ENCODE measurements at regions of chr11 and their contacts with region 1.

Region 1: GRCh38 chr11:111422494-111423249 is 43.6 kb upstream of the POU2AF1 start:
- DNase-seq: no peak
- ATAC-seq: peak; percentile 93
- H3K4me3 ChIP-seq: no peak overlapping the region
- H3K27ac ChIP-seq: no peak overlapping the region
- H3K4me1 ChIP-seq: peaks cover 39% of the 10 kb centered on the region
- H3K27me3 ChIP-seq: no peaks in the 10 kb centered on the region
- CTCF ChIP-seq: peak; percentile 85 to 98 (median 94)
- EP300 ChIP-seq: no peak
- POLR2A ChIP-seq: no peak
- RAD21 ChIP-seq: peak; percentile 100

Region 2: DNA sequence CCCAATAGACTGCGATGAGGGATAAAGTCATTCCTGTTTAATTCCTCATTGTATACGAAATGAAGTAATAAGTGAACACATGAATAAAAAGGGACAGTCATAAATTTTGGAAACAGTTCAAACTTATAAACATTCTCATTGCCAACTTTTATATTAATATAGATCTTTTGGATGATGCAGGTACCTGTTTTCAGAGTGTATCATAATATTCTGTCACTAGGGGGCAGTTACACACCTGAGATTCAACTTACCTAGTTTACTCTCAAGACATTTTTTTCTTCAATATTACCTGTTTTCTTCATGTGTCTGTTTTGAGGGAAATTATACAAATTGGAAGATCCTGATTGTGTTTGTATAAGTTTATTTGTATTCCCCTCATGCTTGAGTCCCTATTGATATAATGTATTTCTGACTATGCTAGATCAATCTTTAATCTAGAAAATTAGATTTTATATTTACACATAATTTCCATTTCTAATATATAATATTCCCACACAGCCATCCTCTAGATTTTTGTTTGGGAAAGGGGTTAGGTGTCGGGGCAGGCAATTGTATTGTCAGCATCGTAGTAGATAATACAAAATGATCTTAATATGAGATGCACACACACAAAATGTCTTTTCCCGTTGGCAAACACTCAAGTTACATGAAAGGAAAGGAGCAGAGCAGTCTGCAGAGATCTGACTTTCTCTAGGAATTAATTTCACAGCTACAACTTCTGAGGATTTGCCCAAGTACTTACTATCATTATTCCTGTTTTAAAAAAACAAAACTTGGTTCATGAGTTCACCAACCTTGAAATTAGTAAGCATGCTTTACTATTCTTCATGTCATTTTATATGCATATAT is 974.6 kb before region 1 on chr11:
- CTCF ChIA-PET with region 1: interaction called, 3 read pairs
- POLR2A ChIA-PET with region 1: no interaction called
- RAD21 ChIA-PET with region 1: no interaction called
- SMC1A ChIA-PET with region 1: interaction called, 3 read pairs
- in situ Hi-C with region 1: loop called (anchors 10 kb)
- intact Hi-C with region 1: no loop called
- DNase-seq: no peak
- ATAC-seq: peak; percentile 65
- H3K4me3 ChIP-seq: no peak overlapping the region
- H3K27ac ChIP-seq: no peak overlapping the region
- H3K4me1 ChIP-seq: peaks cover 3% of the 10 kb centered on the region; the same call in 1 of the 2 replicates
- H3K27me3 ChIP-seq: no peaks in the 10 kb centered on the region
- CTCF ChIP-seq: peak; percentile 38 to 52 (median 49); a peak in 4 of 6 replicates
- EP300 ChIP-seq: no peak
- POLR2A ChIP-seq: no peak
- RAD21 ChIP-seq: peak; percentile 68

Region 3: DNA sequence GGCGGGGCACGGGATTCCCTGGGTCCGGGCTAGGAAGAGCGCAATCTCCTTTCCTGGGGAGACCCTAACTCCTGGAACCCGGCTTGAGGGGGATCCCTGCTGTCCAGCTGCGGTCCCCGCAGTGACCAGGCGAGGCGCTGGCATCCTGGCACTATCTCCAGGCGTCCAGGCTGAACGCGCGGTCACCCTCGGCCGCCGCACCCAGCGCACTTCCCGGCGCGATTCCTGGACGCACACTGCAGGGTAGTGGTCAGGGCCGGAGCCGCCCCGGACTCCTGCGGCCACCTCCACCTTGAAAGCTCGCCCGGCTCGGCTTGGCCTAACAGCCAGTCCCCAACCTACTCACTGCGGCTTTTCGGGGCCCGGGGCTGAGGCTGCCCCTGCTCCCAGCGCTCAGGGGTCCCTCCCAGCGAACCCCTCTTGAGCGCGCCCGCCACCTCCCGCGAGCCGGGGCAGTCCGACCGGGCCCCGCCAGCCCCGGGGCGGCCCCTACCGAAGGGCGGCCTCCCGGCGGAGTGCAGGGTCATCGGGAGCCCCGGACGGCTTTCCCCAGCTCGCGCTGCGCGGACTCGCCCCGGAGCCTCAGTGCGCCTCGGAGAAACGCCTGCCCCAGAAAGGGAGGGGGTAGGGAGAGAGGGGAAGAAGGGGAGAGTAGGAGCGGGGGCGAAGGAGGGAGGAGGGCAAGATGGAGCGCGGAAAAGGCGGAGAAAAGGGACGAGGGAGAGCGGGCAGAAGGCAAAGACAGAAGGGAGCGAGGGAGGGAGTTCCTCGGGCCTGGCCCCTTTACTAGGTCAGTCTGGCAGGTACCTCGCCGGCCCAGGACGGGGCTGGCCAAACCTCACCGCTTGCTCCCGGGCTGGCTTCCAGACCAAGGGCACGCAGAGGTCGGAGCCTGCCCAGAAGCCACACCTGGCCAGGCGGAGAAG is 123.3 kb before region 1 on chr11:
- CTCF ChIA-PET with region 1: interaction called, 26 read pairs
- POLR2A ChIA-PET with region 1: interaction called, 5 read pairs
- RAD21 ChIA-PET with region 1: interaction called, 16 read pairs
- SMC1A ChIA-PET with region 1: interaction called, 10 read pairs
- in situ Hi-C with region 1: no loop called
- intact Hi-C with region 1: no loop called
- DNase-seq: no peak
- ATAC-seq: peak; percentile 88
- H3K4me3 ChIP-seq: peak overlapping the region; percentile 71
- H3K27ac ChIP-seq: no peak overlapping the region
- H3K4me1 ChIP-seq: no peaks in the 10 kb centered on the region
- H3K27me3 ChIP-seq: peaks cover 0 to 7% of the 10 kb centered on the region in 2 experiments; a peak in 3 of 4 replicates
- CTCF ChIP-seq: peak; percentile 32 to 65 (median 44); a peak in 5 of 6 replicates
- EP300 ChIP-seq: no peak
- POLR2A ChIP-seq: no peak
- RAD21 ChIP-seq: peak; percentile 36; the same call in 1 of the 2 replicates

Region 4: GRCh38 chr11:111352935-111353710 is 69.5 kb before region 1 on chr11:
- CTCF ChIA-PET with region 1: interaction called, 10 read pairs
- POLR2A ChIA-PET with region 1: interaction called, 3 read pairs
- RAD21 ChIA-PET with region 1: interaction called, 20 read pairs
- SMC1A ChIA-PET with region 1: interaction called, 972 read pairs
- in situ Hi-C with region 1: no loop called
- intact Hi-C with region 1: no loop called
- DNase-seq: no peak
- ATAC-seq: 0 out of 3 replicates have a peak, but pooled peaks have one; percentile 18
- H3K4me3 ChIP-seq: no peak overlapping the region
- H3K27ac ChIP-seq: no peak overlapping the region
- H3K4me1 ChIP-seq: peaks cover 5% of the 10 kb centered on the region; the same call in 1 of the 2 replicates
- H3K27me3 ChIP-seq: no peaks in the 10 kb centered on the region
- CTCF ChIP-seq: no peak
- EP300 ChIP-seq: no peak
- POLR2A ChIP-seq: no peak
- RAD21 ChIP-seq: 0 out of 2 replicates have a peak, but pooled peaks have one; percentile 3

Region 5: DNA sequence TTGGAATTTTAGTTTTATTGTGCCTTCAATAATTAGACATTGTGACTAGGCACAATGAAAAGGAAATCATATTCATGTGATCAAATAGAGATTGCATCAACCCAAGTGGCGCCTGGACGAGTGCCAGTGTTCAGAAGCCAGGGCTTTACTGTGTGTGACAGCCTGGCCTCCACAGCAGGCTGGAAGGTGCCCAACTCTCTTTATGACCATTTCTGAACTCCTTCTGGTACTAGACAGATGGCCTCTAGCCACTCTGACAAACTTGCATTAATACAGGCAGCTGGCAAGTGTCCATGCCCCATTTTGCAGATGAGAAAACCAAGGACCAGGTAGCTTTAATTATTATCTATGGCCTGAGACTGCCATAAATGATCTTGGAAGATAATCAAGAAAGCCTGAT is 35.3 kb before region 1 on chr11:
- CTCF ChIA-PET with region 1: interaction called, 11 read pairs
- POLR2A ChIA-PET with region 1: interaction called, 11 read pairs
- RAD21 ChIA-PET with region 1: interaction called, 12 read pairs
- SMC1A ChIA-PET with region 1: interaction called, 105 read pairs
- in situ Hi-C with region 1: no loop called
- intact Hi-C with region 1: no loop called
- DNase-seq: no peak
- ATAC-seq: no peak
- H3K4me3 ChIP-seq: no peak overlapping the region
- H3K27ac ChIP-seq: no peak overlapping the region
- H3K4me1 ChIP-seq: peaks cover 15% of the 10 kb centered on the region
- H3K27me3 ChIP-seq: no peaks in the 10 kb centered on the region
- CTCF ChIP-seq: no peak
- EP300 ChIP-seq: no peak
- POLR2A ChIP-seq: no peak
- RAD21 ChIP-seq: no peak

Region 6: DNA sequence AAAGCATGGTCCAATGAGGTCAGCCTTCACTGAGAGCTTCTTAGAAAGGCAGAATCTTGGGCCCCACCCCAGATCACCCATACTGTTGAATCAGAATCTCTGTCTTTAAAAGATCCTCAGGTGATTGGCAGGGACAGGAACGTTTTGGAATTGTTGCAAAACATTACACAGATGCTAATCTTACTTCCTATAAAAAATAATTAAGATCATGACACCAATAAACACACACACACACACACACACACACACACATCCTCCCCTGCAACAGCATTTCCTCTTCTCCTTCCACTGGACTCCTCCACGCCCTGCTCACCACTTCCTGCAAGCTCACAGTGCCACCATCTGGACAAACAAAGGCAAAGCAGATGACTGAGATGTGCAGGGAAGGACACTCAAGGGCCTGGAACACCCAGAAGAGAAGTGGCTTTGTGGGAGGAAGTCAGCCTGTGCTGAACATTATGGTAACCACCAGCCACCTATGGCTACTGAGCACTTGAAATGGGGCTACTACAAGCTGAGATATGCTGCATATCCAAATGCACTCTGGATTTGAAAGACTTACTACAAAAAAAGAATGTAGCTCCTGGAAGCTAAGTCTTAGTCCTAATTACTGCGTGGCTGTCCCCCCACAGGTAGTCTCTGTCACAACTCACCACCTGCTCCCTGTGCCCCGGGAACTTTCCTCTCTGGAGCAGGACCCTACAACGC is 23.9 kb after region 1 on chr11:
- CTCF ChIA-PET with region 1: interaction called, 72 read pairs
- POLR2A ChIA-PET with region 1: interaction called, 3 read pairs
- RAD21 ChIA-PET with region 1: interaction called, 31 read pairs
- SMC1A ChIA-PET with region 1: interaction called, 50 read pairs
- in situ Hi-C with region 1: no loop called
- intact Hi-C with region 1: no loop called
- DNase-seq: peak; percentile 76
- ATAC-seq: peak; percentile 98
- H3K4me3 ChIP-seq: no peak overlapping the region
- H3K27ac ChIP-seq: no peak overlapping the region
- H3K4me1 ChIP-seq: peaks cover 9% of the 10 kb centered on the region
- H3K27me3 ChIP-seq: no peaks in the 10 kb centered on the region
- CTCF ChIP-seq: peak; percentile 91 to 96 (median 94)
- EP300 ChIP-seq: no peak
- POLR2A ChIP-seq: no peak
- RAD21 ChIP-seq: peak; percentile 100

Measured in GM12878 (cell line).